ENCODE measurements at regions of chr17 and their contacts with region 1.

Region 1: GRCh38 chr17:40287494-40288369 is at the start of gene CDC6:
- ATAC-seq: peak; percentile 78 to 97 (median 96)
- H3K4me3 ChIP-seq: peak within 1 kb of the TSS; percentile 36 to 53 (median 45)
- H3K27ac ChIP-seq: no peak within 1 kb of the TSS
- H3K4me1 ChIP-seq: peaks cover 7 to 12% of the 10 kb centered on the region in 2 donors
- total RNA-seq, gene CDC6: 1.7 to 30.9 (median 3.6) TPM

Region 2: DNA sequence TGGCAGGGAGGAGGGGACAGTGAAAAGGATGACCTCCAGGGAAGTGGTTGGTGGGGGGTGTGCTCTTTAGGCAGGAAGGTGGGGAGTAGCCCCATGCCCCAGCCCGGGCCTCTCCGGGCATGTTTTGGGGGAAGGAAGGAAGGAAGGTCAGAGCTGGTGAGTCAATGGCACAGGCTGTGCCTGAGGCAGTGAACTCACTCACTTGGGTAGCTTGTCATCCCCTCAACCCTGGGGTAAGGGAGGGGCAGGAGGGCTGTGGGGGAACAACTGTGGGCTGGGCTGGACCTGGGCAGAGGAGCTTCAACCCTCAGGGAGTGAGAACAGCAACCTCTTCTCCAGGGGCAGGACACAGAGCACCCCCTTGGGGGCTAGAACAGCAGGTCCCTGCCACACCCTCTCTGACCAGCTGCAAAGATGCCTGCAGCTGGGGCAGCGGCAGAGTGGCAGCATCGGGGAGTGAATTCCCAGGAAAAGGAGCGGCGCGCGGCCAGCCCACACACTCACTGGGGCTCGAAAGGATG is 266.2 kb before region 1 on chr17:
- in situ Hi-C with region 1: loop called in 3 of 9 experiments (anchors 25 kb)
- ATAC-seq: peak in 3 of 8 experiments; percentile 41 to 70 (median 59)
- H3K4me3 ChIP-seq: no peak overlapping the region
- H3K27ac ChIP-seq: no peak overlapping the region
- H3K4me1 ChIP-seq: peaks cover 2 to 8% of the 10 kb centered on the region in 2 donors

Region 3: DNA sequence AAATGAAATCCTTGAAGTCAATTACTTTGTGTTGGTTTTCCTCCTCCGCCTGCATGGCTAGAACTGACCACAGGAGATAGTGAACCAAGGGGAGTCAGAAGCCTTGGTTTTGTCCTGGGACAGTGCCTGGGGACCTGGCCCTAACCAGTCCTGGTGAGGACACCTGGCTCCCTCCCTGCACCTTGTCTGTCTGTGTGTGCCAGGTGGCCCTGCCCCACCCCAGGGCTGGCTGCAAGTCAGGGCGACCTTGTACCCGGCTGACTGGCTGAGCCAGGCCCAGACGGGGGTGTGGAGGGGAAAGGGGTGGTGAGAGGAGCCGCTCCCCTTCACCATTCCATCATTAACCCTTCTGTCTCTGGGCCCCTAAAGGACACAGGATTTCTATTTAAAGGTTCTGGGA is 107.0 kb before region 1 on chr17:
- in situ Hi-C with region 1: no loop called
- ATAC-seq: no peak
- H3K4me3 ChIP-seq: no peak overlapping the region
- H3K27ac ChIP-seq: no peak overlapping the region
- H3K4me1 ChIP-seq: peaks cover 11 to 14% of the 10 kb centered on the region in 2 donors

Region 4: GRCh38 chr17:40203131-40203530 is 84.6 kb before region 1 on chr17:
- in situ Hi-C with region 1: loop called in 4 of 9 experiments (anchors 5 to 10 kb)
- ATAC-seq: no peak
- H3K4me3 ChIP-seq: no peak overlapping the region
- H3K27ac ChIP-seq: no peak overlapping the region
- H3K4me1 ChIP-seq: no peaks in the 10 kb centered on the region

Region 5: DNA sequence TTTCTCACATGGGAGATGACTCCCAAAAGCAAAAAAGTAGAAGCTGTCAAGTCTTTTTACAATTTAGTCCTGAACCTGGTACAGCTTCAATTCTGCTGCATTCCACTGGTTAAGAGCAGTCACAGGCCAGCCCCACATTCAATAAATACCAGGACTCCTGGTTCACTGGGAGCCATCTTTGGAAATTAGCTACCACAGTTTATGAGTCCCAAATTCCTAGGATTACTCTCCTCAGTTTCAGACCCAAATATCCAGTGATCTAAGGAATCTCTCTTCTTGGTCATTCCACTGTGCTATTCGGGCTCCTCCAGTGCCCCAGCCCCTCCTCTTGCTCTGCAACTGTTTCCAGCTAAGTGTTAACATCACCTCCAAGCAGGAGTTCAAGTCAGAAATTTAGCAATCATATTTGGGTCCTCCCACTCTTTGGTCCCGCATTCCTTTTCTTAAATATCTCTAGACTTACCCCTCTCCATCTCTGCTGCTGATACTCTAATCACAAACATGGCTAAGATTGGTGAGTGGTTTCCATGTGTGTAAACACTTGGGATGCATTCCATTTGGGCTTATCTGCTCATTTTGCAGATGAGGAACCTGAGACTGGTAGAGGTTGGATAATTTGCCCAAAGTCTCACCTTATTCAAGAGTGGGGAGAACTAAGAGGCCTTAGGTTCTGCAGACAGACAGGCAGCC is 78.2 kb before region 1 on chr17:
- in situ Hi-C with region 1: loop called in 4 of 9 experiments (anchors 5 to 10 kb)
- ATAC-seq: no peak
- H3K4me3 ChIP-seq: no peak overlapping the region
- H3K27ac ChIP-seq: no peak overlapping the region
- H3K4me1 ChIP-seq: no peaks in the 10 kb centered on the region